K562 (cell line): ENCODE measurements at regions of chr3 and their contacts with region 1.

Region 1: GRCh38 chr3:197186887-197187588 is 111.4 kb downstream of the DLG1 start:
- DNase-seq: peak; percentile 30 to 73 (median 46)
- ATAC-seq: peak; percentile 93
- H3K4me3 ChIP-seq: no peak overlapping the region
- H3K27ac ChIP-seq: no peak overlapping the region
- H3K4me1 ChIP-seq: no peaks in the 10 kb centered on the region; a peak in 1 of 5 replicates
- H3K27me3 ChIP-seq: no peaks in the 10 kb centered on the region
- CTCF ChIP-seq: peak; percentile 48 to 82 (median 68); a peak in 5 of 6 replicates
- EP300 ChIP-seq: no peak
- POLR2A ChIP-seq: no peak
- RAD21 ChIP-seq: peak; percentile 79 to 84

Region 2: DNA sequence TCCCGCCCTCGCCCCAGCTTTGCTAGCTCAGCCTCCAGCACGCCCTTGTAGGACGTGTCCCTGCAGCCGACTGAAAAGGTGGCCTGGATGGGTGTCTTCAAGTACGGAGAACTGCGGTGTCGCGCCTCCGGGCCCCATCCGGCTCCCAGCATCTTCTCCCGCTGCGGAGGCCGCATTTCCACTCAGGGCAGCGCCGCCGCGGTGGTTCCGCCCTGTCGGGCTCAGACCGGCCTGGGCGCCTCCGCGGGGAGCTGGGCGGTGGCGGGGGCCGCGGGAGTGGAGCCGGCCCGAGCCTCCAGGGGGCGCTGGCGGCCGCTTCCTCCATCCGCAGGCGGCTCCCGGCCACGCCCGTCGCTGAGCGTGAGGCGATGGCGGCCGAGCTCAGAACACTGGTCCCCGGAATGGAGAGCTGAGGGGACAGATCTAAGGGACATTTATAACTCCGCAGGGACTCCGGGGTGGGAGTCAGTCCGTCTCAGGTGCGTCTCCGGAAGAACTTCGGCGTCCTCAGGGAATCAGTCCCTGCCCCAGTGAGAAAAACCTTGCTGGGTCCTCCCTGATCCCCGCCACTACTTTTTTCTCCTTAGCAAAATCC is 658.3 kb before region 1 on chr3:
- CTCF ChIA-PET with region 1: no interaction called
- POLR2A ChIA-PET with region 1: no interaction called
- in situ Hi-C with region 1: loop called (anchors 10 kb)
- intact Hi-C with region 1: loop called (anchors 10 kb)
- DNase-seq: peak; percentile 88 to 90 (median 90)
- ATAC-seq: peak; percentile 98
- H3K4me3 ChIP-seq: peak overlapping the region; percentile 53
- H3K27ac ChIP-seq: peak overlapping the region; percentile 81
- H3K4me1 ChIP-seq: peaks cover 8 to 22% of the 10 kb centered on the region in 2 experiments; a peak in 4 of 5 replicates
- H3K27me3 ChIP-seq: no peaks in the 10 kb centered on the region
- CTCF ChIP-seq: peak; percentile 81 to 87 (median 84)
- EP300 ChIP-seq: no peak
- POLR2A ChIP-seq: peak; percentile 74
- RAD21 ChIP-seq: peak; percentile 77 to 79

Region 3: GRCh38 chr3:196537319-196537984 is 649.6 kb before region 1 on chr3:
- CTCF ChIA-PET with region 1: no interaction called
- POLR2A ChIA-PET with region 1: no interaction called
- in situ Hi-C with region 1: loop called (anchors 10 kb)
- intact Hi-C with region 1: no loop called
- DNase-seq: peak; percentile 32 to 44 (median 39)
- ATAC-seq: peak; percentile 45
- H3K4me3 ChIP-seq: no peak overlapping the region
- H3K27ac ChIP-seq: no peak overlapping the region
- H3K4me1 ChIP-seq: peaks cover 4 to 13% of the 10 kb centered on the region in 2 experiments; a peak in 2 of 5 replicates
- H3K27me3 ChIP-seq: no peaks in the 10 kb centered on the region
- CTCF ChIP-seq: peak; percentile 31 to 64 (median 62); a peak in 4 of 6 replicates
- EP300 ChIP-seq: no peak
- POLR2A ChIP-seq: no peak
- RAD21 ChIP-seq: peak; percentile 30 to 61

Region 4: GRCh38 chr3:196813903-196814302 is 373.1 kb before region 1 on chr3:
- CTCF ChIA-PET with region 1: no interaction called
- POLR2A ChIA-PET with region 1: no interaction called
- in situ Hi-C with region 1: no loop called
- intact Hi-C with region 1: no loop called
- DNase-seq: peak in 3 of 4 experiments; percentile 20 to 75 (median 66)
- ATAC-seq: peak; percentile 82
- H3K4me3 ChIP-seq: no peak overlapping the region
- H3K27ac ChIP-seq: peak overlapping the region; percentile 67
- H3K4me1 ChIP-seq: peaks cover 0 to 17% of the 10 kb centered on the region in 2 experiments; a peak in 2 of 5 replicates
- H3K27me3 ChIP-seq: no peaks in the 10 kb centered on the region
- CTCF ChIP-seq: no peak
- EP300 ChIP-seq: peak; percentile 67; the same call in 1 of the 2 replicates
- POLR2A ChIP-seq: no peak
- RAD21 ChIP-seq: no peak

Region 5: DNA sequence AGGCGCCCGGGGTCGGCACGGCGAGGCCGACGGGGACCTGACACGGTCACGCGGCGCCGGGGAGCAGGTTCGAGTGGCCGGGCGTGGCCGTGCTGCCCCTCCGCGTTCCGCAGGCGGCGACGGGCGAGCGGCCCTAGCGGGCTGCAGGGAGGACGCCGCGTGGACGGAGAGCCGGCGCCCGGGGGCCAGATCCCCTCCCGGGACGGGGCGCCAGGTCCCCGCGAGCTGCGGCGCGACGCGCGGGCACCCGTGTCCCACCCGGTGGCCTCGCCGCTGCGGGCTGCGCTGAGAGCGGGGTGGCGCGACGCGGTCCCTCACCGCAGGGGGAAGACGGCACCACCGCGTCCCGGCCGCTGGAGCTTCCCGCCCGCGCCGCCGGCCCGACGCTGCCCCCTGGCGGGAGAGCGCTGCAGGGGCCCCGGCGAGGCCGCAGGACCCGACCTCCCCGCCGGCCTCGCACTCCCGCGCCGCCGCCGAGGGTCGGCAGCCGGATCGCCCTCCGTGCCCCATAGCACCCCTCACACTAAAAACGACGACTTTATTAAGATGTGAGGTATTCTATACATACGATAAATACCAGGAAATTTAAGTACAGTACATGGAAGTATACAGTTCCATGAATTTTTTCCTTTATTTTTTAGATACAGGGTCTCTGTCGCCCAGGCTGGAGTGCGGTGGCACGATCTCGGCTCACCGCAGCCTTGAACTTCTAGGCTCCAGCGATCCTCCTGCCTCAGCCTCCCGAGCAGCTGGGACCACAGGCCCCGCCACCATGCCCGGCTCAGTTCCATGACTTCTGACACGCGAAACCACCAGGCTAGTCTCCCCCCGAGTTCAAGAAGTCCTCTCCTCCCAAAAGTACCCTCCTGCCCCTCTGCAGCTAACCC is 217.1 kb before region 1 on chr3:
- CTCF ChIA-PET with region 1: no interaction called
- POLR2A ChIA-PET with region 1: no interaction called
- in situ Hi-C with region 1: loop called (anchors 10 kb)
- intact Hi-C with region 1: no loop called
- DNase-seq: peak; percentile 82 to 90 (median 88)
- ATAC-seq: peak; percentile 86
- H3K4me3 ChIP-seq: peak overlapping the region; percentile 71
- H3K27ac ChIP-seq: peak overlapping the region; percentile 94
- H3K4me1 ChIP-seq: peaks cover 20 to 32% of the 10 kb centered on the region in 2 experiments; a peak in 4 of 5 replicates
- H3K27me3 ChIP-seq: no peaks in the 10 kb centered on the region
- CTCF ChIP-seq: peak; percentile 57 to 97 (median 76)
- EP300 ChIP-seq: no peak
- POLR2A ChIP-seq: no peak
- RAD21 ChIP-seq: peak; percentile 78 to 90

Region 6: DNA sequence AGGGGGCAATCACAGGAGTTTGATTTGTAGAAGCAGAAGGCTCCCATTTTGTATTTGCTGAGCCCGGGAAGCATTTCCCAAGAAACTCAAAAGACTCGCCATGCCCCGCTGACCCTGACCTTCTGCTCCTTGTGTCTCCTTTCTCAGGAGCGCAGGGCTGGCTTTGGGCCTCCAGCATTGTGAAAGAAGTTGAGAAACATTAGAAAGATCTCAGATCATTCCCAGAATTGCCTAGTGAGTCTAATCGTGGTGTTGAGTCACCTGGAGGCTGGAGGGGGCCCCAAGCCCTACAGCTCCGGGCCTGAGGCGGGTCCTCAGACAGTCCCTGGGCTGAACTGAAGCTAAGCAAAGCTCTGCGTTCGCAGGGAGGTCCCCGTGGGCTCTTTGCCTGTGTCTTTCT is 207.5 kb before region 1 on chr3:
- CTCF ChIA-PET with region 1: interaction called, 5 read pairs
- POLR2A ChIA-PET with region 1: no interaction called
- in situ Hi-C with region 1: loop called (anchors 10 kb)
- intact Hi-C with region 1: loop called (anchors 1 kb)
- DNase-seq: peak in 3 of 4 experiments; percentile 25 to 52 (median 51)
- ATAC-seq: peak; percentile 52
- H3K4me3 ChIP-seq: no peak overlapping the region
- H3K27ac ChIP-seq: no peak overlapping the region
- H3K4me1 ChIP-seq: peaks cover 14 to 17% of the 10 kb centered on the region in 2 experiments; a peak in 4 of 5 replicates
- H3K27me3 ChIP-seq: no peaks in the 10 kb centered on the region
- CTCF ChIP-seq: no peak
- EP300 ChIP-seq: no peak
- POLR2A ChIP-seq: no peak
- RAD21 ChIP-seq: no peak

Region 7: GRCh38 chr3:197002701-197003454 is 184.2 kb before region 1 on chr3:
- CTCF ChIA-PET with region 1: interaction called, 26 read pairs
- POLR2A ChIA-PET with region 1: no interaction called
- in situ Hi-C with region 1: no loop called
- intact Hi-C with region 1: loop called (anchors 5 kb)
- DNase-seq: peak; percentile 87 to 99 (median 97)
- ATAC-seq: peak; percentile 90
- H3K4me3 ChIP-seq: peak overlapping the region; percentile 38
- H3K27ac ChIP-seq: peak overlapping the region; percentile 74
- H3K4me1 ChIP-seq: peaks cover 3 to 45% of the 10 kb centered on the region in 2 experiments; a peak in 3 of 5 replicates
- H3K27me3 ChIP-seq: no peaks in the 10 kb centered on the region
- CTCF ChIP-seq: peak; percentile 48 to 83 (median 72)
- EP300 ChIP-seq: no peak
- POLR2A ChIP-seq: no peak
- RAD21 ChIP-seq: peak; percentile 47 to 69

Region 8: DNA sequence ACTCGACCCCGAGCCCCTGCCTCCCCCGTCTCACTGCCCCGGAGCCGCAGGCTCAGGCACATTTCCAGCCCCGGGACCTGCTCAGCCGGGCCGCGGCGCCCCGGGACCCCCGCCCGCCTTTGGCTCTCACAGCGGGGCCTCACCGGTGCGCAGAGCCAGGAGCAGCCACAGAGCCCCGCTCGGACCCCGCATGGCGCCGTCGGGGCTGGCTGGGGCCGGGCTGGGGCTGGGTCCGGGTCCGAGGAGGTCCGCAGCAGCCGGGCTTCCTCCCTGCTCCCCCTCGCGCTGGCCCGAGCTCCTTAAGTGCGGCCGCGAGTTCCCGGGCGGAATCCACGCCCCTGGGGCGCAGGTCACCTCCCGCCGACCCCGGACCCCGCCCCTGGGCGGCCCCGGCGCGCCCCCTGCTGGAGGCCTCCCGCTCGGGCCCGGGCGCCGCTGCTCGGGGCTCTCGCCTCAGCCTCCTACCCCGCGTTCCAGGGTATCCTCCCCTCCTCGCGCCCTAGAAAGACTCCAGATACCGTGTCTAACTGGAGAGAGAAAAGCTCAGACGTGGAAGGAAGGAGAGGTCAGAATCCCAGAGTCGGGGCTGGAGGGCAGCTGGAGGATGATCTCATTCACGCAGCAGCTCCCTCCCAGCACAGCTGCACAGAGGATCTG is 157.4 kb before region 1 on chr3 and contains the start of gene MELTF:
- CTCF ChIA-PET with region 1: no interaction called
- POLR2A ChIA-PET with region 1: no interaction called
- in situ Hi-C with region 1: no loop called
- intact Hi-C with region 1: loop called (anchors 10 kb)
- DNase-seq: peak; percentile 88 to 97 (median 96)
- ATAC-seq: peak; percentile 88
- H3K4me3 ChIP-seq: peak within 1 kb of the TSS; percentile 84
- H3K27ac ChIP-seq: peak within 1 kb of the TSS; percentile 85
- H3K4me1 ChIP-seq: peaks cover 25 to 53% of the 10 kb centered on the region in 2 experiments
- H3K27me3 ChIP-seq: no peaks in the 10 kb centered on the region
- CTCF ChIP-seq: peak; percentile 79 to 89 (median 84)
- EP300 ChIP-seq: no peak
- POLR2A ChIP-seq: peak; percentile 65
- RAD21 ChIP-seq: peak; percentile 65
- polyA plus RNA-seq, gene MELTF: 0.35 to 0.52 TPM